ENCODE measurements at regions of chr11 and their contacts with region 1.

Region 1: GRCh38 chr11:45354976-45355705 is 69.0 kb upstream of the SYT13 start:
- DNase-seq: peak in 1 of 2 experiments; percentile 13
- H3K4me3 ChIP-seq: no peak overlapping the region
- H3K27ac ChIP-seq: no peak overlapping the region
- H3K4me1 ChIP-seq: no peaks in the 10 kb centered on the region
- H3K27me3 ChIP-seq: peaks cover 59% of the 10 kb centered on the region; the same call in 1 of the 2 replicates
- CTCF ChIP-seq: no peak

Region 2: DNA sequence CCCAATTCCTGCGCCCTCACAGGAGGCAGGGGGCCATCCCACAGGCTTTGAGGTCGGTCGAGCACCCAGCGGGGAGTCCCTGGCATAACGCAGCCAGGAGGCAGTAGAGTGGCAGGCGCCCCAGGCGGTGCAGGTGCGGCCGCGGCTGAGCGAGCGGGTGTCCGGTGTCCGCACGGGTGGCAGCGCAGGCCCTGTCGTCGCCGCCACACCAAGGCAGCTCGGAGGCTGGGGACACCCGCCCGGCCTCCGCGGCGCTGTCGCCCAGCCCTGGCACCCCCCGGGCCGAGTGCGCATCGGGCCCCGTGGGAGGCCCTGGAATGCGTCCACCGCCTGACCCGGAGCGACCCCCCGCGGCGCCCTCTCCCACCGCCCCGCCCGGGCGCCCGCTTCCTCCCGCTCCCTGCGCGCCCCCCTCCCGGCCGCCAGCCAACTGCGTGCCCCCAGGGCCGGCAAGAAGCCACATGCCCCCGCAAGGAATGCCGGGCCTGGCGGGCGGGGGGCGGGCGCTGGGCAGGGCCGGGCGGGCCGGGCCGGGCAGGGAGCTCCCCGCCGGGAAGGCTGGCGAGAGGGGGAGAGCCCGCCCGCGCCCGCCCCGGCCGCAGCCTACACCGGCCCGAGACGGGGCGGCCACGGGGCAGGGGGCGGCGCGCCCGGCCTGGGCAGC is 174.8 kb before region 1 on chr11:
- CTCF ChIA-PET with region 1: no interaction called
- POLR2A ChIA-PET with region 1: no interaction called
- intact Hi-C with region 1: no loop called
- DNase-seq: peak; percentile 63 to 90
- H3K4me3 ChIP-seq: peak overlapping the region; percentile 51; the same call in 1 of the 2 replicates
- H3K27ac ChIP-seq: no peak overlapping the region
- H3K4me1 ChIP-seq: 0 out of 2 replicates have a peak, but pooled peaks cover 8% of the 10 kb centered on the region
- H3K27me3 ChIP-seq: no peaks in the 10 kb centered on the region
- CTCF ChIP-seq: peak; percentile 1; the same call in 1 of the 2 replicates

Region 3: DNA sequence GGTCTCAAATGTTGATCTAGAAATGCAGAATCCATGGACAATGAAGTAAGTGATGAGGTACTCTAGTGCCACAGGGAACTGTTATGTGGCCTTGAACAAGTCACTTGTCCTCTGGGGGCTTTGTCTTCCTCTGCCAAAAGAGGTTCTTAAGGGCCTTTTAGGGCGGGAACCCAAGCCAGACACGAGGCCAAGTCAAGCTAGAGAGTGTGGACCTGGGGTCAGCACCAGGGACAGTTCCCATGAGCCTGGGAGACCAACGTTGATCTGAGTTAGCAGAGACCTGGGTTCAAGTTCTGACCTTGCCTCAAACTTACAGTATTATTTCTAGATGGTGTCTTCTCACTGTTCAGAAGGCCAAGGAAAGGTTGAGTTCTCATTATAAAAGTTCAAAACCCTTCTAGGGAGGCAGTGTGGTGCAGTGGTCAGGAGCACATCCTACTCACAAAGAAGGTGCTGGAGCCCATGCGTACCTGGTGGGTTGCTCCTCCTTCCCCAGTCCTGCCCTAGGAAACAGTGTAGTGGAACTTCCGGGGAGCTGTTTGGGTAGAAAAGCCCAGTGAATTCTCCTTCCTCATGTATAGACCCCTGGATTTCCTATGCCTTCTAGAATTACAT is 188.8 kb after region 1 on chr11:
- CTCF ChIA-PET with region 1: interaction called, 10 read pairs
- POLR2A ChIA-PET with region 1: no interaction called
- intact Hi-C with region 1: no loop called
- DNase-seq: no peak
- H3K4me3 ChIP-seq: no peak overlapping the region
- H3K27ac ChIP-seq: no peak overlapping the region
- H3K4me1 ChIP-seq: no peaks in the 10 kb centered on the region
- H3K27me3 ChIP-seq: peaks cover 27% of the 10 kb centered on the region
- CTCF ChIP-seq: no peak